ENCODE measurements at regions of chrX and their contacts with region 1.

Region 1: DNA sequence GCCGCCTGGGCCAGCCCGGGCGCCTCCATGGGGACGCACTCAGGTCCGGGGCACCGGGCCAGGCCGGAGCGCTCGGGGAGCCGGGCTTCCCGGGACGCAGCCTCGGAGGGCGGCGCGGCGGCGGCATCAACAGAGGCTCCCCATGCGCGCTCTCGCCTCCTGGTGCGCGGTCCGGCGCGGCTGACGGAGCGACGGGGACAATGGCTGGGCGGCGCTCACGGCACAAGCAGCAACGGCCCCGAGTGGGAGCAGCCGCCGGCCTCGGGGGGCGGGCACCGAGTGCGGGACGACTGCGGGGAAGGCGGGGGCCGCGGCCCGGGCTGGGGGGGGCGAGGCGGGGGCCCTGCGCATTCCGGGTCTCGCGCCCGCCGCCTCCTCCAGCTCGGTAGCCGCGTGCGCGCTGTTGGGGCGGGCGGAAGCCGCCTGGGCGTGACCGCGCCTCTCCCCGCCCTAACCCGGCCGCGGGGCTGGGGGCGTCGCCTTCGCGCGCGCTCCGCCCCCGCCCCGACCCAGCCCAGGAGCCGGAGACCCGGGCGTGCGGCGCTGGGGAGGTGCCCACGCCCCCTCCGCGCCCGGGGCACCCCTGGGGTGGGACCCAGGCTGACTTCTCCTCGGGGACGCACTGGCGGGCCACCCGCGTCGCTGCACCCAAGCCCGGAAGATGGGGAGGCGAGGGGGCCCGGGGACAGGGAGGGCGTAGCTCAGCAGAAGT is at the start of gene PRKX:
- DNase-seq: peak; percentile 26 to 53
- ATAC-seq: peak; percentile 65 to 94 (median 84)
- H3K4me3 ChIP-seq: peak within 1 kb of the TSS; percentile 63 to 82 (median 68)
- H3K27ac ChIP-seq: peak within 1 kb of the TSS; percentile 75 to 90 (median 82)
- H3K4me1 ChIP-seq: peaks cover 0 to 9% (median 0%) of the 10 kb centered on the region in 9 donors
- H3K27me3 ChIP-seq: peaks cover 0 to 20% (median 0%) of the 10 kb centered on the region in 7 donors
- CTCF ChIP-seq: no peak
- total RNA-seq, gene PRKX: 1.7 to 10.1 (median 3.4) TPM

Region 2: DNA sequence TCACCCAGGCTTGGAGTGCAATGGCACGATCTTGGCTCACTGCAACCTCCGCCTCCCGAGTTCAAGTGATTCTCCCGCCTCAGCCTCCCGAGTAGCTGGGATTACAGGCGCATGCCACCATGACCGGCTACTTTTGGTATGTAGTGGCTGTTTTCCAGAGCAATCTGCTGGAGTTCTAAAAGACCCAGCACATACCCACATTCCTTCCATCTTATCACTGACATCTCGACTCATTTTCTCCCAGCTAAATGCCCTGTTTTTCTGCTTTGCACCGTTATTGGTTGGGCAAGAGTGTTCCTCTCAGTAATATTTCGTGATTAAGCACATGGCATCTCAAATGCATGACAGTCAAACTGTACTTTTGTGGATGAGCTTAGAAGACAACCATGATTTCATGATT is 53.6 kb before region 1 on chrX:
- intact Hi-C with region 1: loop called in 2 of 10 experiments (anchors 10 kb)
- DNase-seq: no peak
- ATAC-seq: no peak
- H3K4me3 ChIP-seq: no peak overlapping the region
- H3K27ac ChIP-seq: no peak overlapping the region
- H3K4me1 ChIP-seq: peaks cover 0 to 8% (median 0%) of the 10 kb centered on the region in 9 donors
- H3K27me3 ChIP-seq: no peaks in the 10 kb centered on the region
- CTCF ChIP-seq: no peak

Region 3: GRCh38 chrX:3798550-3798949 is 85.2 kb after region 1 on chrX:
- intact Hi-C with region 1: loop called in 1 of 10 experiments (anchors 10 kb)
- DNase-seq: no peak
- ATAC-seq: no peak
- H3K4me3 ChIP-seq: no peak overlapping the region
- H3K27ac ChIP-seq: no peak overlapping the region
- H3K4me1 ChIP-seq: peaks cover 0 to 7% (median 0%) of the 10 kb centered on the region in 9 donors
- H3K27me3 ChIP-seq: no peaks in the 10 kb centered on the region
- CTCF ChIP-seq: no peak